ENCODE measurements at regions of chr3 and their contacts with region 1.

Region 1: DNA sequence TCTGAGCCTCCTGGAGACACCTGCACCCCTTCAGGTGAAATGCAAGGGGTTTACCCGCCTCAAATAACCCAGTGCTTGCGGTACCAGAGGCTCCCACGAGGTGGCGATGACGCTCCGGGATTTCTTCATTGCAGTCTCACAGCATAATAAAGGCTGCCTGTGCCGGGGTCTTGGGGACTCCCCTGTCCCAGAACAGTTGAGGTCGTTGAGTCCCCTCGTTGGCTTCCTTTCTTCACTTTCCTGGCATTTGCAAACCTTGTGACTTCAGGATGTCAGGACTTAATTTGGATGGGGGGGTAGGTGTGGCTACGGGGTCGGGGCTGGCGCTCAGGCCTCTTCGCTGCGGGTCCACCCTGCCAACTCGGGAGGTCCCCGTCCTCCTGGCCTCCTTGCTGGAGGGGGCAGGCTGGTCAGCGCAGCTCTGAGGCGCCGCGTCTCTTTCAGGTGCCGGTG is 1.3 kb downstream of the GNAT1 start:
- DNase-seq: peak in 5 of 6 donors; percentile 52 to 92 (median 85)
- ATAC-seq: peak; percentile 45 to 62 (median 57)
- H3K4me3 ChIP-seq: no peak overlapping the region
- H3K27ac ChIP-seq: no peak overlapping the region
- H3K4me1 ChIP-seq: peaks cover 0 to 19% (median 5%) of the 10 kb centered on the region in 3 donors
- H3K27me3 ChIP-seq: peaks cover 0 to 7% (median 0%) of the 10 kb centered on the region in 4 donors
- CTCF ChIP-seq: peak; percentile 68 to 88 (median 84)

Region 2: GRCh38 chr3:50121416-50122032 is 71.2 kb before region 1 on chr3:
- intact Hi-C with region 1: loop called (anchors 2 to 10 kb)
- DNase-seq: peak; percentile 59 to 87 (median 79)
- ATAC-seq: peak; percentile 72 to 90 (median 86)
- H3K4me3 ChIP-seq: no peak overlapping the region
- H3K27ac ChIP-seq: no peak overlapping the region
- H3K4me1 ChIP-seq: no peaks in the 10 kb centered on the region
- H3K27me3 ChIP-seq: no peaks in the 10 kb centered on the region
- CTCF ChIP-seq: peak; percentile 66 to 86 (median 84)

Region 3: DNA sequence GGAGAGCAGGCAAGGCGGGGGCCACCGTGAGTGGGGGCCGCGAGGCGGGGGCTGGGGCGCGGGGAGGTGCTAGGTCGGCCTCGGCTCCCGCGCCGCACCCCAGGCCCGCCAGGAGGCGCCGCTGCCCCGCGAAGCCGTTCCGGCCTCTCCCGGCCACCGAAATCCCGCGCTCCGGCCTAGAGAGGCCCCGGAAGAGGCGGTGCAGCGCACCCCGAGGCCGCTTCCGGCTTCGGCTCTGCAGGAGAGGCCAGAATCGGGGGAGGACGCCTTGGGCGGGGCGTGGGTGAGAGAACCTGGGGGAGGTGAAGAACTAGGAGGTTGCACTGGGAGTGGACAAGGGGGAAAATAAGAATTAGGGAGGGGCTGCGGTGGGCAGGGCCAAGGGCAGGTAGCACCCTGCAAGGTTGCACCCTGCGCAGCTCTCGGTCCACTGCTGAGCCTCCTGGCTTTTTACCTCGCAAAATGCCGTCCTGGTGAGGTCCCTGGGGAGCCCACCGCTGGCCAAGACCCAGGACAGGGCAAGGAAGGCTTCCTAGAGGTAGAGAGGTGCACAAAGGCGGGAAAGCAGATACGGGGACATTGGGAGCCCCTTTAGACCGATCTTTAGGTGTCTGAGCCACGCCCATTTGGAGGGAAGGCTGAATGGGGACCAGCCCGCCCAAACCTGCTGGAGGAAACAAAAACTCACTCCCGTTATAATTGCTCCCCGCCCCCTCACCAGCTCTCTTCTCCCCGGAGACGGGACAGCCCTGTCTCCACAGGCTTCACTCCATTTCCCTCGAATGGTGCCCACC is 34.9 kb after region 1 on chr3:
- intact Hi-C with region 1: loop called in 2 of 3 experiments (anchors 2 kb)
- DNase-seq: peak; percentile 94 to 98 (median 95)
- ATAC-seq: peak; percentile 88 to 92 (median 91)
- H3K4me3 ChIP-seq: peak overlapping the region; percentile 43 to 65 (median 52)
- H3K27ac ChIP-seq: peak overlapping the region; percentile 68 to 84 (median 84)
- H3K4me1 ChIP-seq: peaks cover 0 to 7% (median 4%) of the 10 kb centered on the region in 3 donors
- H3K27me3 ChIP-seq: no peaks in the 10 kb centered on the region
- CTCF ChIP-seq: peak; percentile 78 to 93 (median 87)

Region 4: DNA sequence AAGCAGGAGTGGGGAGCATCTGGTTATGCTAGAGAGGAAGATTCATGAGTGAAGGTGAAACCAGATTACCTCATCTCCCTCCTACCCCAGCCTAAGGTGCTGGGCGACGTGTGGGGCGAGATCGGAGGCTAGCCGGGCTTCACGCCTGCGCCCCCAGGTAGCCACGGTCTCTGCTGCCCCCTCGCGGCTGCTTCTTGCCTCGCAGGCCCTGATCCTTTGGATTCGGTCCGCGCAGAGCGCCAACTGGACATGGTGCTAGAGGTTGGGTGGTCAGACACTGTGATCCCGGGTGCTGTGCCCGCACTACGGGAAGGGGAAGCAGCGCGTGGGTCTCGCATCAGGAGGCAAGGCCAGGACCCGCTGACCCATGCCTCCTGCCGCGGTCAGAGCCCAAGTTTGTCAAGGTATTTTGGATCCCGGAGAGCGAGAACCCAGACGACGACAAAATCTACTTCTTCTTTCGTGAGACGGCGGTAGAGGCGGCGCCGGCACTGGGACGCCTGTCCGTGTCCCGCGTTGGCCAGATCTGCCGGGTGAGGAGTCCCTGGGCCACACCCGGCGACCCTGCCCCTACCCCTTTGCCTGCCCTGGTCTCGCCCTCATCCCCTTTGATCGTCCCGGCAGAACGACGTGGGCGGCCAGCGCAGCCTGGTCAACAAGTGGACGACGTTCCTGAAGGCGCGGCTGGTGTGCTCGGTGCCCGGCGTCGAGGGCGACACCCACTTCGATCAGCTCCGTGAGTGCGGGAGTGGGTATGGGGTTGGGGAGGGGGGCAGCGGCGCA is 80.4 kb after region 1 on chr3:
- intact Hi-C with region 1: loop called in 1 of 3 experiments (anchors 5 kb)
- DNase-seq: peak; percentile 79 to 99 (median 92)
- ATAC-seq: peak; percentile 53 to 78 (median 69)
- H3K4me3 ChIP-seq: peak overlapping the region in 1 of 4 donors; percentile 26
- H3K27ac ChIP-seq: peak overlapping the region in 3 of 4 donors; percentile 2 to 93 (median 11)
- H3K4me1 ChIP-seq: peaks cover 9 to 19% (median 18%) of the 10 kb centered on the region in 3 donors
- H3K27me3 ChIP-seq: no peaks in the 10 kb centered on the region
- CTCF ChIP-seq: peak; percentile 96 to 98 (median 96)